Left cardiac atrium (tissue), 4 donors: ENCODE measurements at regions of chr16 and their contacts with region 1.

Region 1: GRCh38 chr16:24975428-24975889 is 39.7 kb downstream of the ARHGAP17 start:
- DNase-seq: no peak
- ATAC-seq: peak in 1 of 2 donors; percentile 43

Region 2: DNA sequence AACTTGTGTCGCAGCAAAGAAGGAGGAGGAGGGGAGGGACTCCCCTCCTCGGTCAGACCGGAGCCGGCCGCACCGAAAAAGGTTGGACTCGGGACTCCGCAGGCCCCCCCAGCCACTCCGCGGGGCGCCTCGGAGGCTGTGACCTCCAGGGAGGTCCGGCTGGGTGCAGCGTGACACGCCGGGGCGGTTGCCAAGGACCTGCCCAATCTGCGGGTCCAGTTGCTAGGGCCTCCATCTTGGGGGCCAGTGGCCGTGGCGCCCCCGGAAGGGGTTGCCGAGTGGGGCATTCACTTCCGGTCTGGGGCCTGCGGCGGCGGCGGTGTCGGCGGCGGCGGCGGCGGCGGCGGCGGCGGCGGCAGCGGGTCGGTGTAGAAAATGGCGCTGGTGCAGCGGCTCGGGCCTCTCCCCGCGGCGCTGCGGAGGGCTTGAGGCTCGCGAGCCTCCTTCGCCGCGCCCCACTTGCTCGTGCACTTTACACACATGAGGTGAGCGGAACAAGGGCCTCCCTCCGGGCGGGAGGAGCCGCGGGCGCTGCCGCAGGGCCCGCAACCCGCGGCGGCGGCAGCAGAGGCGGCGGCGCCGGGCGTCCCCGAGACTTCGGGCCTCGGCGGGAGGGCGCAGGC is 246.0 kb before region 1 on chr16 and contains the start of gene TNRC6A:
- intact Hi-C with region 1: no loop called
- DNase-seq: peak; percentile 93
- ATAC-seq: peak; percentile 97 to 98
- total RNA-seq, gene TNRC6A: 31.5 to 31.9 TPM

Region 3: GRCh38 chr16:25014500-25015147 is 39.2 kb after region 1 on chr16:
- intact Hi-C with region 1: loop called in 1 of 2 experiments (anchors 5 kb)
- DNase-seq: peak; percentile 54
- ATAC-seq: peak; percentile 56 to 57

Region 4: DNA sequence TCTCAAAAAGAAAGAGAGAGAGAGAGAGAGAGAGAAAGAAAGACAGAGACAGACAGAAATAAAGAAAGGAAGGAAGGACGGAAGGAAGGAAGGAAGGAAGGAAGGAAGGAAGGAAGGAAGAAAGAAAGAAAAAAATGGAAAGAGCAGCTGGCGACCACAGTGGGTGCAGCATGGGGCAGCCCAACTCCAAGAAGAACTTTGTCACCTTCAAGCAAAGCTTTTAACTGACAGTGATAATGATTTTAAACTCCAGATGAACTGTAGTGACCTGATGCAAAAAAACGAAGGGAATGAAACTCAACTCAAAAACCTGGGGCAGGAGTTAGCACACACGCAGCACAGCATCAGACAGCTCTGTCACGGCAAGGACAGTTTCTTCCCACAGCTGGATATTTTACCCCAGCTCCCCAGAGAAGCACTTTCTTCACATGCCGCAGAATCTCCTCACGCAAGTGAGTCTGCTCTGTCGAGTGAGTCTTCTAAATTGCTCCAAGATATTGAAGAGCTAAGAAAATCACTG is 44.7 kb after region 1 on chr16:
- intact Hi-C with region 1: loop called in 1 of 2 experiments (anchors 10 kb)
- DNase-seq: no peak
- ATAC-seq: no peak